GM23248 (cell line): ENCODE measurements at regions of chr10 and their contacts with region 1.

Region 1: GRCh38 chr10:132452631-132453469 is 55.9 kb downstream of the PWWP2B start:
- DNase-seq: peak; percentile 84
- H3K4me3 ChIP-seq: 0 out of 2 replicates have a peak overlapping the region, but pooled peaks have one; percentile 34
- H3K27ac ChIP-seq: no peak overlapping the region
- H3K4me1 ChIP-seq: no peaks in the 10 kb centered on the region
- H3K27me3 ChIP-seq: no peaks in the 10 kb centered on the region

Region 2: DNA sequence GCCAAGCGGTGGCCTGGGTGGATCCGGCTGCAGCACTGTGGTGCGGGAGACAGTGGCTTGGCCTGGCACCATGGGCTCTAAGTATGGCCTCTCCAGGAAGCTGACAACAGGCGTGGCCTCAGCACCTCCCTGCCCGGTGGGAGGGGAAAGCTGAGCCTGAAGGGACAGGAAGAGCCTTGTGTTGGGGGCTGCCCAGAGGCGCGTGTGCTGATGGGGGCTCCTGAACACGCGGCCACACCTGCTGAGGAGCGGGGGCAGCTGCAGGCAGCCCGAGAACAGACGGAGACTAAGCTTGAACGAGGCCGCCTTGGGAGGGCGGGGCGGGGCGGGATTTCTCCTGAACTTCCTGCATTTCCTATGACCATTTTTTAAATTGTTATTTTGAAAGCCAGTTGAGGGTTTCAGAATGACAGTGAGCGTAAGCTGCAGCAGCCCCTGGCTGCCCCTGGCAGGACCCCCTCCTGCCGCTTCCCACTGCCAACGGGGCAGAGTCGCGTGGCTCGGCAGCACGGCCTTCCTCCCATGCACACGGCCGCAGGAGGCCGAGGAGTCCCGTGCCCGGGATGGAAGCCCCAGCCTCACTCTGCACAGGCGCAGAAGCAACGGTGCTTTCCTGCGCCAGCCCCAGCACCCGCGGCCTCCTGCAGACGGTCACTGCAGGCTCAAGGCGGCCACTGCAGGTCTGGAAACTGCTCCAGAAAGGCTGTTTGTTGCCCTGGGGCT is 222.9 kb before region 1 on chr10:
- in situ Hi-C with region 1: loop called (anchors 5 kb)
- DNase-seq: no peak
- H3K4me3 ChIP-seq: no peak overlapping the region
- H3K27ac ChIP-seq: no peak overlapping the region
- H3K4me1 ChIP-seq: no peaks in the 10 kb centered on the region
- H3K27me3 ChIP-seq: no peaks in the 10 kb centered on the region